SK-N-SH (cell line): ENCODE measurements at regions of chr4 and their contacts with region 1.

Region 1: DNA sequence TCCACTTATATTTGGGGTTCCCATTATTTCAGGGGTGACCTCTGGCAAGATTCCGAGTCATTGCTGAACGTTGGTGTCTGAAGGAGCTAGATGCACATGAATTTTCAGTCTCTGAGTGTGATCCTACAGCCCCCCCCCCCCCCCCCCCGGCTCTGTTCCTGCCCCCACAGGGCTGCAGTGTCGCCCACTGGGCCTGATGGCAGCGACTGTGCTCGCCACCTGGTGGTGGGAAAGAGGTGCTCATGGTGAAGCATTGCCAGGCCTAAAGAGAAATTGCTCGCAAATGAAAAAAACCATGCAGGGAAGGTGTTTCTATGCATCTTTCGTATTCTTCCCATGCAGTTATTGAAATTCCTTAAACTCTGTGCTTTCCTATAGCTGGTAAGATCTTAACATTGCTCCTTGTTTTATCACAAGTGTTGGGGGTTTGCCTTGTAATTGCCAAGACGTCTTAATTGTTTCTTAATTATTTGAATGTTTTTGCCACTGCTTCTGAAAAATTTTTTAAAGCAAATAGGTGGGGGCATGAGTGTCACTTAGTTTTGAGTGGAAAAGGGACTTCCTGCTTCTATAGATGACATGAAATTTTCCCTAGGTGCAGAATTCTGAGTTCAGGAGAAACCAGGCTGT is 63.2 kb downstream of the CLDN22 start:
- DNase-seq: peak; percentile 70
- H3K4me3 ChIP-seq: no peak overlapping the region
- H3K27ac ChIP-seq: no peak overlapping the region
- H3K4me1 ChIP-seq: no peaks in the 10 kb centered on the region; a peak in 1 of 4 replicates
- H3K27me3 ChIP-seq: no peaks in the 10 kb centered on the region
- CTCF ChIP-seq: peak; percentile 70
- EP300 ChIP-seq: no peak
- RAD21 ChIP-seq: peak; percentile 70

Region 2: DNA sequence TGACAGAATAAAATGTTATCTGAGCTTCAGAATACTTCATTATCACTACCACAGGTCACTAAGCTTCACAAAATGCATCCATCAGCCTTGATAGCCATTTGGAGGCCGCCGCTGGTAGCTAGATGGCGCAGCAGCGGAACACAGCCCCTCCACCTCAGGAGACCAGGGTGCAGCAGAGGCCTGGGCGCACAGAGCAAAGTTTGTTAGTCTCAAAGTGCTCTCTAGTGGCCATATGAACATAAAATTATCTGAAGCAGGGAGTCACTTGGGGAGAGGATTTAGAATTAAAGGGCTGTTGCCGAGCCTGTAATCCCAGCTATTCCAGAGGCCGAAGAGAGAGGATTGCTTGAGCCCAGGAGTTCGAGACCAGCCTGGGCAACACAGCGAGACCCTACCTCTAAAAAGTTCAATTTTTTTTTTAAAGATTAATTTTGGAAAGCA is 331.6 kb before region 1 on chr4:
- CTCF ChIA-PET with region 1: interaction called, 24 read pairs
- POLR2A ChIA-PET with region 1: no interaction called
- DNase-seq: peak; percentile 79
- H3K4me3 ChIP-seq: no peak overlapping the region; a peak in 1 of 4 replicates
- H3K27ac ChIP-seq: no peak overlapping the region
- H3K4me1 ChIP-seq: no peaks in the 10 kb centered on the region; a peak in 2 of 4 replicates
- H3K27me3 ChIP-seq: no peaks in the 10 kb centered on the region
- CTCF ChIP-seq: peak; percentile 63
- EP300 ChIP-seq: no peak
- RAD21 ChIP-seq: peak; percentile 91

Region 3: GRCh38 chr4:183241322-183241640 is 15.6 kb before region 1 on chr4:
- CTCF ChIA-PET with region 1: interaction called, 19 read pairs
- POLR2A ChIA-PET with region 1: no interaction called
- DNase-seq: no peak
- H3K4me3 ChIP-seq: no peak overlapping the region
- H3K27ac ChIP-seq: no peak overlapping the region
- H3K4me1 ChIP-seq: peaks cover 0 to 4% of the 10 kb centered on the region in 2 experiments; a peak in 1 of 4 replicates
- H3K27me3 ChIP-seq: no peaks in the 10 kb centered on the region
- CTCF ChIP-seq: no peak
- EP300 ChIP-seq: no peak
- RAD21 ChIP-seq: no peak

Region 4: DNA sequence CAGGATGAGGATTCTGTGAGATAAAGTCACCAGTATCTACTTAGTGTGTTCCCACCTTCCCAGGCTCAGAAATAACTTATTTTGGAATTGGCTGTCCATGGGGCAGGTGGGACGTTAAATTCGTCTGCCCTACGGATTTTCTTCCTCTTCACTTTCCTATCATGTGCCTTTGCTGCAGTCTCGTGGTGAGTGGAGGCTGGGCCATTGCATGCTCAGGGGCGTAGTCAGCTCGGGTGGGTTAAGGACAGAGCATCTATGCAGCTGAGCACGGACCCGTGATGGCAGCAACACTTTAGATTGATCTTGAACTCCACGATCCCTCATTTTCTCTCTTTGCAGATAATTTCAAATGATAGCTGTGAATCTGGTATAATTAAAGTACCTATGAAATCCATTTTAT is 11.7 kb after region 1 on chr4:
- CTCF ChIA-PET with region 1: interaction called, 84 read pairs
- POLR2A ChIA-PET with region 1: no interaction called
- DNase-seq: no peak
- H3K4me3 ChIP-seq: no peak overlapping the region
- H3K27ac ChIP-seq: no peak overlapping the region
- H3K4me1 ChIP-seq: peaks cover 0 to 16% of the 10 kb centered on the region in 2 experiments; a peak in 1 of 4 replicates
- H3K27me3 ChIP-seq: no peaks in the 10 kb centered on the region
- CTCF ChIP-seq: no peak
- EP300 ChIP-seq: no peak
- RAD21 ChIP-seq: no peak

Region 5: GRCh38 chr4:183407128-183407585 is 150.3 kb after region 1 on chr4:
- CTCF ChIA-PET with region 1: interaction called, 14 read pairs
- POLR2A ChIA-PET with region 1: no interaction called
- DNase-seq: peak; percentile 92
- H3K4me3 ChIP-seq: peak overlapping the region; percentile 52 to 74
- H3K27ac ChIP-seq: peak overlapping the region; percentile 70 to 86
- H3K4me1 ChIP-seq: peaks cover 0 to 13% of the 10 kb centered on the region in 2 experiments; a peak in 1 of 4 replicates
- H3K27me3 ChIP-seq: no peaks in the 10 kb centered on the region
- CTCF ChIP-seq: peak; percentile 93
- EP300 ChIP-seq: no peak
- RAD21 ChIP-seq: peak; percentile 78